ENCODE measurements at regions of chr10 and their contacts with region 1.

Region 1: GRCh38 chr10:24197263-24197662 is 11.7 kb upstream of the KIAA1217 start:
- DNase-seq: no peak
- H3K4me3 ChIP-seq: no peak overlapping the region
- H3K27ac ChIP-seq: no peak overlapping the region
- H3K4me1 ChIP-seq: peaks cover 0 to 3% (median under 1%) of the 10 kb centered on the region in 3 donors
- H3K27me3 ChIP-seq: no peaks in the 10 kb centered on the region
- CTCF ChIP-seq: no peak

Region 2: GRCh38 chr10:23994479-23995046 is 202.7 kb before region 1 on chr10:
- intact Hi-C with region 1: loop called (anchors 5 kb)
- DNase-seq: peak in 4 of 5 donors; percentile 70 to 89 (median 82)
- H3K4me3 ChIP-seq: no peak overlapping the region
- H3K27ac ChIP-seq: no peak overlapping the region
- H3K4me1 ChIP-seq: peaks cover 0 to 2% (median 0%) of the 10 kb centered on the region in 3 donors
- H3K27me3 ChIP-seq: no peaks in the 10 kb centered on the region
- CTCF ChIP-seq: peak; percentile 89

Region 3: GRCh38 chr10:24034571-24034970 is 162.7 kb before region 1 on chr10:
- intact Hi-C with region 1: no loop called
- DNase-seq: peak in 3 of 5 donors; percentile 33 to 65 (median 45)
- H3K4me3 ChIP-seq: no peak overlapping the region
- H3K27ac ChIP-seq: no peak overlapping the region
- H3K4me1 ChIP-seq: peaks cover 0 to 7% (median 4%) of the 10 kb centered on the region in 3 donors
- H3K27me3 ChIP-seq: no peaks in the 10 kb centered on the region
- CTCF ChIP-seq: no peak

Region 4: DNA sequence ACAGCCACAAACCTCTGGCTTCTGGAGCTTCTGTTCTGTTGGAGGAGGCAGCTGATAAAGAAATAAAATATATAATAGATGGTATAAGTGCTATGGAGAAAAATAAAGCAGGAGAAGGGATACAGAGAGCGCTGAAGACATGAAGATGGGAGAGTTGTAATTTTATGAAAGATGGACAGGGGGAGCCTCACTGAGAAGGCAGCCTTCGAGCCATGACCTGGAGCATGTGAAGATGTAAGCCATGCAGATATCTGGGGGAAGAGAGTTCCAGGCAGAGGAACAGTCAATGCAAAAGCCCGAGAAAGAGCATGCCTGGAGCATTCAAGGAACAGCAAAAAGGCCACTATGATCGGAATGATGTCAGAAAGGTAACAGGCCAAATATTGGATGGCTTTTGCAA is 199.1 kb after region 1 on chr10:
- intact Hi-C with region 1: no loop called
- DNase-seq: no peak
- H3K4me3 ChIP-seq: no peak overlapping the region
- H3K27ac ChIP-seq: no peak overlapping the region
- H3K4me1 ChIP-seq: no peaks in the 10 kb centered on the region
- H3K27me3 ChIP-seq: no peaks in the 10 kb centered on the region
- CTCF ChIP-seq: peak; percentile 26

Region 5: GRCh38 chr10:24680647-24681524 is 483.6 kb after region 1 on chr10:
- intact Hi-C with region 1: no loop called
- DNase-seq: peak in 2 of 5 donors; percentile 3 to 13
- H3K4me3 ChIP-seq: no peak overlapping the region
- H3K27ac ChIP-seq: no peak overlapping the region
- H3K4me1 ChIP-seq: peaks cover 0 to 2% (median 0%) of the 10 kb centered on the region in 3 donors
- H3K27me3 ChIP-seq: no peaks in the 10 kb centered on the region
- CTCF ChIP-seq: no peak

Measured in kidney (tissue), 22 donors.